Transverse colon (tissue), 4 donors: ENCODE measurements at regions of chr7 and their contacts with region 1.

Region 1: DNA sequence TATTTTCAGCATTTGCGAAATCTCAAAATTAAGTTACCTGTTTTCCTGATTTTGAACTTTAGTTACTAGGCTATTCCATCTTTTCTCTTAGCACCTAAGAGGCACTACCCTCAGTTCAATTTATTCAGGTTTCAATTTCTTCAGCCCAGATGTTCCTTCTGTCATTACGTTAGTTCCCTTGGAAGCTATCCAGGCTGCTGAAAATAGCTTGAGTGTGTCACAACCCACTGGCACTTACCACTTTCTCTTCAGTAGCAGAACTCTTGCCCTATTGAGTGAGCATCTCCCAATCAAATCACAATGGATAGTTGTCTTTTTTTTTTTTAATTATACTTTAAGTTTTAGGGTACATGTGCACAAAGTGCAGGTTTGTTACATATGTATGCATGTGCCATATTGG is 332.7 kb upstream of the LRGUK start:
- DNase-seq: no peak
- H3K4me3 ChIP-seq: no peak overlapping the region
- H3K27ac ChIP-seq: no peak overlapping the region
- H3K4me1 ChIP-seq: no peaks in the 10 kb centered on the region
- H3K27me3 ChIP-seq: no peaks in the 10 kb centered on the region
- CTCF ChIP-seq: no peak
- EP300 ChIP-seq: no peak
- POLR2A ChIP-seq: no peak

Region 2: DNA sequence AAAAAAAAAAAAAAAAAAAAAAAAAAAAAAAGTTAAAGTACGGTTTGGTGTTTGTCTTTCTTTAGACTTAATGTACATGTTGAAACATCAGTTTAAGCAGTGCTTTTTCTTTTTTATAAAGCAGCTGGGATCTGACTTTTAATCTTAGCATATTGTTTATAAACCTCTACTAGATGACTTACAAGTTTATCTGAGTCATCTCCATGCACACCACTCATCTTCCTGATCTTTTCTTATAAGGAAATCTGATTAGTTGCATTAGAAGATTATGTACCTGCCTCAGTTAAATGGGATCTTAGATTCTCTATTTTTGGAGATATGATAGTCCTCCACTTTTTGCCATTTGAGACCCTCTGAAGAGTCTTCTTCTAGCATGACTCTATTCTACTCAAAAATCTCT is 59.3 kb before region 1 on chr7:
- in situ Hi-C with region 1: loop called in 1 of 4 experiments (anchors 10 kb)
- intact Hi-C with region 1: no loop called
- DNase-seq: no peak
- H3K4me3 ChIP-seq: no peak overlapping the region
- H3K27ac ChIP-seq: no peak overlapping the region
- H3K4me1 ChIP-seq: no peaks in the 10 kb centered on the region
- H3K27me3 ChIP-seq: no peaks in the 10 kb centered on the region
- CTCF ChIP-seq: no peak
- EP300 ChIP-seq: no peak
- POLR2A ChIP-seq: no peak

Region 3: GRCh38 chr7:133961724-133962123 is 167.2 kb after region 1 on chr7:
- in situ Hi-C with region 1: no loop called
- intact Hi-C with region 1: no loop called
- DNase-seq: no peak
- H3K4me3 ChIP-seq: no peak overlapping the region
- H3K27ac ChIP-seq: no peak overlapping the region
- H3K4me1 ChIP-seq: no peaks in the 10 kb centered on the region
- H3K27me3 ChIP-seq: no peaks in the 10 kb centered on the region
- CTCF ChIP-seq: no peak
- EP300 ChIP-seq: no peak
- POLR2A ChIP-seq: no peak